ENCODE measurements at regions of chr2 and their contacts with region 1.

Region 1: DNA sequence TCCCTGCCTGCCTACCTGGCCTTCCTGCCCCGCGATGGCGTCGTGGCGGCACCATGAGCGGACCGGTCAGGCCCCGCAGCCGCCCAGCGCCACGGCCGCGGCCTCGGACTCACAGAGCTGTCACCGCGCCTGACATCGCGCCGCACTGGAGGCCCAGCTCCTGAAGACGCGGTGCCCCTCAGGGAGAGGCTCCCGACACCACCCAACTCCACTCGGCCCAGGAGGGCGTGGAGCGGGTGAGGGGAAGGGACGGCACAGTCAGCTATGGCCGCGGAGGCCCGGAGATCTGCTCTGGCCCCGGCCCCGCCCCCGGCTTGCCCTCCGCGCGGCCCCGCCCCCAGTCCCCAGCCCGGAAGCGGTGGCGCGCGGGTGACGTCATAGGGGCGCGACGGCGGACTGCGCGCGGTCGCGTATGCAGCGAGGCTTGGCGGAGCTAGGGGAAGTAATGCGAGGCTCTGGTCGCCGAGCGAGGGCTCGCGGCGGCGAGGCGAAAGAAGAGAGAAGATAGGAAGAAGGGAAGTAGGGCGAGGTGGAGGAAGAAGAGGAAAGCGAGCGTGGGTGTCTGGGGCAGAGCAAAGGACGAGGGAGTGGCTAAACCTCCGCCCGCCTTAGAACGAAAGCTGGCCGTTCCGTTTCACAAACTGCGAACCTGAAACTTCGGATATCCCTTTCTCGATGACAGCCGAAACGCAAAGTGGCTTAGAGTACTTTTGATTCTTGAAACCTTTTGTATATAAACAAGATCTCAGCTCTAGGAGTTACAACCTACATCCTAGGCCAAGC is at the start of gene SLC35F5:
- DNase-seq: peak; percentile 96
- ATAC-seq: peak; percentile 99
- total RNA-seq, gene SLC35F5: 54.0 TPM

Region 2: GRCh38 chr2:113818382-113818951 is 61.9 kb after region 1 on chr2:
- intact Hi-C with region 1: loop called (anchors 2 kb)
- DNase-seq: no peak
- ATAC-seq: peak; percentile 84

Region 3: DNA sequence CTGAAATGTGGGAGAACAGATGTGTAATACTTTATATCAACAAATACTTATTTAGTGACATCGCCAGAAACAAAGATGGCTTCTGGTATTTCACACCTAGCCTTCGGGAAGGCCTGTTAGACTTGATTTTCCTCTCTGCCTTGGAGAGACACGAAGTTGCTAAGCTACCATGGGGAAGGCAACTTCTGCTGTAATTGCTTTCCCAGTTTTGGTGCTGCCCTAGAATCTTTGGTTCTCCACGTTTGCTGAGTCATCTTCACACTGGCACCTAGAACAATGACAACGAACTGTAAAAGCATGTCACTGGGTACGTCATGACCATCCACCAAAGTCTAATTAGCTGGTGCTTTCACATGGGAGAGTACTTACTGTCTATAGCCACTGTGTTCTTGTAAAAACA is 74.6 kb after region 1 on chr2:
- intact Hi-C with region 1: no loop called
- DNase-seq: no peak
- ATAC-seq: no peak

Region 4: GRCh38 chr2:113889471-113890252 is 133.1 kb after region 1 on chr2 and contains the start of gene ACTR3:
- intact Hi-C with region 1: loop called (anchors 1 kb)
- DNase-seq: peak; percentile 98
- ATAC-seq: peak; percentile 99
- total RNA-seq, gene ACTR3: 115 TPM

Region 5: GRCh38 chr2:113940891-113941290 is 184.3 kb after region 1 on chr2:
- intact Hi-C with region 1: loop called (anchors 10 kb)
- DNase-seq: no peak
- ATAC-seq: no peak

Region 6: GRCh38 chr2:114076961-114077360 is 320.4 kb after region 1 on chr2:
- intact Hi-C with region 1: no loop called
- DNase-seq: no peak
- ATAC-seq: no peak

Measured in Right ventricle myocardium inferior (tissue), 1 donor.